B cell (primary cell): ENCODE measurements at regions of chr6 and their contacts with region 1.

Region 1: GRCh38 chr6:129498950-129499842 is 210.8 kb downstream of the ARHGAP18 start:
- DNase-seq: peak; percentile 73
- ATAC-seq: peak; percentile 78
- H3K4me3 ChIP-seq: no peak overlapping the region
- H3K4me3 Mint-ChIP-seq: peak overlapping the region; percentile 31
- H3K27ac ChIP-seq: peak overlapping the region in 1 of 2 donors; percentile 9
- H3K27ac Mint-ChIP-seq: no peak overlapping the region
- H3K4me1 ChIP-seq: peaks cover 9 to 10% of the 10 kb centered on the region in 2 donors
- H3K4me1 Mint-ChIP-seq: peaks cover 9% of the 10 kb centered on the region
- H3K27me3 ChIP-seq: no peaks in the 10 kb centered on the region
- H3K27me3 Mint-ChIP-seq: peaks cover 2% of the 10 kb centered on the region
- CTCF ChIP-seq: peak; percentile 79

Region 2: GRCh38 chr6:129517291-129517690 is 18.1 kb after region 1 on chr6:
- CTCF ChIA-PET with region 1: interaction called, 11 read pairs
- POLR2A ChIA-PET with region 1: no interaction called
- intact Hi-C with region 1: no loop called
- DNase-seq: no peak
- ATAC-seq: no peak
- H3K4me3 ChIP-seq: no peak overlapping the region
- H3K4me3 Mint-ChIP-seq: no peak overlapping the region
- H3K27ac ChIP-seq: no peak overlapping the region
- H3K27ac Mint-ChIP-seq: no peak overlapping the region
- H3K4me1 ChIP-seq: no peaks in the 10 kb centered on the region
- H3K4me1 Mint-ChIP-seq: no peaks in the 10 kb centered on the region
- H3K27me3 ChIP-seq: no peaks in the 10 kb centered on the region
- H3K27me3 Mint-ChIP-seq: peaks cover 3% of the 10 kb centered on the region
- CTCF ChIP-seq: no peak

Region 3: GRCh38 chr6:129575378-129576118 is 76.4 kb after region 1 on chr6:
- CTCF ChIA-PET with region 1: interaction called, 10 read pairs
- POLR2A ChIA-PET with region 1: no interaction called
- intact Hi-C with region 1: loop called (anchors 1 kb)
- DNase-seq: peak; percentile 21
- ATAC-seq: peak; percentile 21
- H3K4me3 ChIP-seq: no peak overlapping the region
- H3K4me3 Mint-ChIP-seq: no peak overlapping the region
- H3K27ac ChIP-seq: no peak overlapping the region
- H3K27ac Mint-ChIP-seq: no peak overlapping the region
- H3K4me1 ChIP-seq: peaks cover 0 to 6% of the 10 kb centered on the region in 2 donors
- H3K4me1 Mint-ChIP-seq: peaks cover 8% of the 10 kb centered on the region
- H3K27me3 ChIP-seq: no peaks in the 10 kb centered on the region
- H3K27me3 Mint-ChIP-seq: no peaks in the 10 kb centered on the region
- CTCF ChIP-seq: peak; percentile 53

Region 4: DNA sequence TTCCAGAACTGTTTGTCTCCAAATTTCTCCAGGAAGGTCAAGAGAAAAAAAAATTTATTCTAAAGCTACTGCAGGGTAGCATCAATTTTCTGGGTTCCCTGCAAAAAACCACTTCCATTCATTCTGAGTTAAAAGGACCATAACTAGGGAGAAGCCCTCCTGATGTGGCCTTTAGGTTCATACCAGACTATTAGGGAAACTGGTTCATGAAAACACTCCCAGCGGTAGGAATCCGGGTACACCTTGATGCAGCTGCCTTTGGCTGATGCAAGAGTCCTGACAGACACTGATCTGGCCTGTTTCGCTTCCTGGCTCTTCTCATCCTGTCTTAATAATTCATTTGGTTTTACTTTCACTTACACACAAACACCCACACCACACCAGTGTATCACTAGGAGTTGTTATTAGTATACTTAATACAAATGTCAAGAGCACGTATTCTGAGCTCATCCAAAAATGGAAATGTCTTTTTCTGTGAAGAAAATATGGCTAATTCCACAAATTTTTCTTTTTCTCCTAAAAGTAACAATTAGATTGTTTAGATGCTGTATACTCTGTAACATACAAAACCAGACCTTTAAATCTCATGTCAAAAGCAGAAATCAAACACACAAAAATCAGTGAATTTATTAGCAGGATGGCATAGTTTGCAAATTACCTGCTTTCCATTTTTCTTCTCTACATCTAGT is 249.2 kb after region 1 on chr6:
- CTCF ChIA-PET with region 1: interaction called, 5 read pairs
- POLR2A ChIA-PET with region 1: no interaction called
- intact Hi-C with region 1: loop called (anchors 2 kb)
- DNase-seq: peak; percentile 78
- ATAC-seq: peak; percentile 90
- H3K4me3 ChIP-seq: peak overlapping the region in 3 of 5 experiments; percentile 24 to 42 (median 24)
- H3K4me3 Mint-ChIP-seq: peak overlapping the region; percentile 70
- H3K27ac ChIP-seq: peak overlapping the region; percentile 70 to 80
- H3K27ac Mint-ChIP-seq: peak overlapping the region; percentile 81
- H3K4me1 ChIP-seq: peaks cover 43 to 46% of the 10 kb centered on the region in 2 donors
- H3K4me1 Mint-ChIP-seq: peaks cover 58% of the 10 kb centered on the region
- H3K27me3 ChIP-seq: no peaks in the 10 kb centered on the region
- H3K27me3 Mint-ChIP-seq: no peaks in the 10 kb centered on the region
- CTCF ChIP-seq: no peak

Region 5: GRCh38 chr6:129936329-129937165 is 437.4 kb after region 1 on chr6:
- CTCF ChIA-PET with region 1: interaction called, 6 read pairs
- POLR2A ChIA-PET with region 1: no interaction called
- intact Hi-C with region 1: loop called (anchors 2 kb)
- DNase-seq: peak; percentile 66
- ATAC-seq: no peak
- H3K4me3 ChIP-seq: no peak overlapping the region
- H3K4me3 Mint-ChIP-seq: peak overlapping the region; percentile 62
- H3K27ac ChIP-seq: no peak overlapping the region
- H3K27ac Mint-ChIP-seq: no peak overlapping the region
- H3K4me1 ChIP-seq: peaks cover 0 to 3% of the 10 kb centered on the region in 2 donors
- H3K4me1 Mint-ChIP-seq: peaks cover 3% of the 10 kb centered on the region
- H3K27me3 ChIP-seq: peaks cover 0 to 7% (median 3%) of the 10 kb centered on the region in 4 experiments
- H3K27me3 Mint-ChIP-seq: peaks cover 19% of the 10 kb centered on the region
- CTCF ChIP-seq: peak; percentile 86

Region 6: DNA sequence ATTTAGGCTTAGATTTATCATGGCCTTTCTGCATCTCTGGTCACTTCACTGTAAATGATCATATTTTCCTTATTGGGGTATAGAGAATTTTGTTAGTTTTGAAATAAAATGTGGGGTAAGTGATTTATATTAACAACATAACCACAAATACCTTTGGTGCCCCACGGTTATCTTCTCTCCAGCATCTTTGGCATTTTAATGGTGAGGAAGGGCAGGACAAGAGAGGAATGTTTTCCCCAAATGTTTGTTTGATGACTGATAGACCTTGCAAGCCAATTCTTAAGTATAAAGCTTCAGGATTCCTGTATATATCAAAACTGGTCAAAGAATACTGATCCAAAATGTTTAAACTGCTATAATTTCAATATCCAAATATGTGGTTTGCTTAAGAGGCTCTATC is 1156.4 kb after region 1 on chr6:
- CTCF ChIA-PET with region 1: no interaction called
- POLR2A ChIA-PET with region 1: no interaction called
- intact Hi-C with region 1: no loop called
- DNase-seq: no peak
- ATAC-seq: no peak
- H3K4me3 ChIP-seq: no peak overlapping the region
- H3K4me3 Mint-ChIP-seq: no peak overlapping the region
- H3K27ac ChIP-seq: no peak overlapping the region
- H3K27ac Mint-ChIP-seq: no peak overlapping the region
- H3K4me1 ChIP-seq: no peaks in the 10 kb centered on the region
- H3K4me1 Mint-ChIP-seq: no peaks in the 10 kb centered on the region
- H3K27me3 ChIP-seq: no peaks in the 10 kb centered on the region
- H3K27me3 Mint-ChIP-seq: peaks cover 11% of the 10 kb centered on the region
- CTCF ChIP-seq: no peak

Region 7: GRCh38 chr6:130872250-130873095 is 1373.3 kb after region 1 on chr6:
- CTCF ChIA-PET with region 1: interaction called, 7 read pairs
- POLR2A ChIA-PET with region 1: no interaction called
- intact Hi-C with region 1: loop called (anchors 1 kb)
- DNase-seq: peak; percentile 72
- ATAC-seq: peak; percentile 43
- H3K4me3 ChIP-seq: no peak overlapping the region
- H3K4me3 Mint-ChIP-seq: no peak overlapping the region
- H3K27ac ChIP-seq: no peak overlapping the region
- H3K27ac Mint-ChIP-seq: no peak overlapping the region
- H3K4me1 ChIP-seq: no peaks in the 10 kb centered on the region
- H3K4me1 Mint-ChIP-seq: no peaks in the 10 kb centered on the region
- H3K27me3 ChIP-seq: no peaks in the 10 kb centered on the region
- H3K27me3 Mint-ChIP-seq: no peaks in the 10 kb centered on the region
- CTCF ChIP-seq: peak; percentile 98